Ascending aorta (tissue), 2 donors: ENCODE measurements at regions of chr14 and their contacts with region 1.

Region 1: GRCh38 chr14:102316743-102317563 is 2.6 kb upstream of the ZNF839 start:
- DNase-seq: peak; percentile 60 to 97
- H3K4me3 ChIP-seq: peak overlapping the region; percentile 51 to 66
- H3K27ac ChIP-seq: peak overlapping the region; percentile 69 to 79
- H3K4me1 ChIP-seq: peaks cover 11 to 30% of the 10 kb centered on the region in 2 donors
- H3K27me3 ChIP-seq: no peaks in the 10 kb centered on the region
- CTCF ChIP-seq: peak; percentile 81 to 95 (median 84)

Region 2: GRCh38 chr14:101761032-101761880 is 555.7 kb before region 1 on chr14 and contains the start of gene PPP2R5C:
- intact Hi-C with region 1: loop called (anchors 2 kb)
- DNase-seq: peak; percentile 55 to 94
- H3K4me3 ChIP-seq: peak within 1 kb of the TSS; percentile 86 to 94
- H3K27ac ChIP-seq: peak within 1 kb of the TSS; percentile 84 to 85
- H3K4me1 ChIP-seq: peaks cover 0 to 5% of the 10 kb centered on the region in 2 donors
- H3K27me3 ChIP-seq: no peaks in the 10 kb centered on the region
- CTCF ChIP-seq: no peak
- total RNA-seq, gene PPP2R5C: 45.6 TPM

Region 3: GRCh38 chr14:102046343-102047278 is 270.3 kb before region 1 on chr14:
- intact Hi-C with region 1: loop called (anchors 5 kb)
- DNase-seq: peak; percentile 41 to 90
- H3K4me3 ChIP-seq: no peak overlapping the region
- H3K27ac ChIP-seq: peak overlapping the region in 1 of 2 donors; percentile 47
- H3K4me1 ChIP-seq: peaks cover 0 to 3% of the 10 kb centered on the region in 2 donors
- H3K27me3 ChIP-seq: no peaks in the 10 kb centered on the region
- CTCF ChIP-seq: peak; percentile 54 to 68 (median 56)

Region 4: GRCh38 chr14:102139248-102140026 is 177.5 kb before region 1 on chr14 and contains the start of gene WDR20:
- intact Hi-C with region 1: loop called (anchors 5 kb)
- DNase-seq: peak; percentile 90 to 98
- H3K4me3 ChIP-seq: peak within 1 kb of the TSS; percentile 96 to 99
- H3K27ac ChIP-seq: peak within 1 kb of the TSS; percentile 81 to 85
- H3K4me1 ChIP-seq: peaks cover 0 to 21% of the 10 kb centered on the region in 2 donors
- H3K27me3 ChIP-seq: no peaks in the 10 kb centered on the region
- CTCF ChIP-seq: no peak
- total RNA-seq, gene WDR20: 44.8 TPM

Region 5: DNA sequence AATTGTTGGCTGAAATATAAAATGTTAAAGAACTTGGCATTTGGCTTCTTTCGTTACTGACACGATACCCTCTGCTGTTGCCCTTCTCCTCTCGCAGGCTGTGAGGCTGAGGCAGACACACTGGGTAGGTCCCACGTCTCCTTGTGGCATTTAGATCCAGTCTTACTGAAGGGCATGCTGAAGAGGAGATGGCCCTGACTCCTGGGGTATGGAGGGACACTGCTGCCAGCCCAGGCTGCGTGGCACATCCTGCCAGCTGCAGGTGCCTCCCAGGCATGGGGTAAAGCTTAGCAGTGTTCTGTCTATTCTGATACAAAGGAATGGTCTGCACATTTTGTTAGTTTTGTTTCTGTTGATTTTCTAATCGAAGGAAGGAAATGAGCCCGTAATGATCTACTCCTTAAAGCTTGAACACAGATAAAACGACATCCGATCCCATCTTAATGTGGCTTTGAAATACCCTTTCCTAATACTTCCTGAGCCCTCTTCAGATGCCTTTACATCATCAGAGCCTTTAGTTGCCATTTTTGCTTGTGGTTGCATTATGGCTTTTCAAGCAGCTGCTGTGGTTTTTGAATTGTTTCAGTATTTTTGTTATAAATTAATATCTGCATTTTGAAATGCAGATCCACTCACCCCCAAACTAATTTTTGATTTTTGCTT is 116.1 kb before region 1 on chr14:
- intact Hi-C with region 1: no loop called
- DNase-seq: no peak
- H3K4me3 ChIP-seq: no peak overlapping the region
- H3K27ac ChIP-seq: no peak overlapping the region
- H3K4me1 ChIP-seq: no peaks in the 10 kb centered on the region
- H3K27me3 ChIP-seq: no peaks in the 10 kb centered on the region
- CTCF ChIP-seq: no peak

Region 6: GRCh38 chr14:102304611-102305509 is 12.1 kb before region 1 on chr14 and contains the start of gene MOK:
- intact Hi-C with region 1: loop called (anchors 1 kb)
- DNase-seq: peak; percentile 83 to 98
- H3K4me3 ChIP-seq: peak within 1 kb of the TSS; percentile 61 to 71
- H3K27ac ChIP-seq: peak within 1 kb of the TSS; percentile 12 to 13
- H3K4me1 ChIP-seq: peaks cover 0 to 7% of the 10 kb centered on the region in 2 donors
- H3K27me3 ChIP-seq: no peaks in the 10 kb centered on the region
- CTCF ChIP-seq: no peak
- total RNA-seq, gene MOK: 17.6 TPM

Region 7: GRCh38 chr14:102591889-102592763 is 275.2 kb after region 1 on chr14 and contains the start of gene RCOR1:
- intact Hi-C with region 1: loop called (anchors 5 kb)
- DNase-seq: peak; percentile 93 to 99
- H3K4me3 ChIP-seq: peak within 1 kb of the TSS; percentile 68 to 83
- H3K27ac ChIP-seq: peak within 1 kb of the TSS; percentile 94 to 98
- H3K4me1 ChIP-seq: peaks cover 8 to 12% of the 10 kb centered on the region in 2 donors
- H3K27me3 ChIP-seq: no peaks in the 10 kb centered on the region
- CTCF ChIP-seq: no peak
- total RNA-seq, gene RCOR1: 4.7 TPM

Region 8: GRCh38 chr14:103552011-103552845 is 1235.3 kb after region 1 on chr14:
- intact Hi-C with region 1: loop called (anchors 10 kb)
- DNase-seq: peak in 1 of 2 donors; percentile 86
- H3K4me3 ChIP-seq: peak overlapping the region; percentile 36 to 48
- H3K27ac ChIP-seq: peak overlapping the region; percentile 95 to 97
- H3K4me1 ChIP-seq: peaks cover 19 to 38% of the 10 kb centered on the region in 2 donors
- H3K27me3 ChIP-seq: no peaks in the 10 kb centered on the region
- CTCF ChIP-seq: no peak